ENCODE measurements at regions of chr1 and their contacts with region 1.

Region 1: DNA sequence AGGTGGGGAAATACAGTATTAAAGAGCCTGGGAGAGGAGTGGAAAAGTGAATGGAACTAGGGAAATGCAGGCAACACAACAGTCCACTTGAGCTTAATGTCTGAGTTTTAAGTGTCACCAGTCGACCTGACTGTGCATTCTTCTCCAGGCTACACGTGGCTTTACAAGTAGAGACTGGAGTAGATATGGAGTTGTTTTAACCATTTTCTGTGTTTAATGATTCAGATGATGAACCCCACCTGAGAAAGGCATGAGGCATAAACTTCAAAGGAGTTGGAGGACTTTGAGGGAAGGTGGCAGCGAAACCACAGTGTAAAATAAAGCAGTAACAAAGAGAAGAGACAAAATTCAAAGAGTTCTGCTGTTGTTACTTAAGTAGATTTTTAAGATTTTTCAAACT is 12.6 kb downstream of the FUBP1 start:
- DNase-seq: no peak
- CTCF ChIP-seq: no peak

Region 2: GRCh38 chr1:77954521-77954920 is 11.8 kb before region 1 on chr1:
- CTCF ChIA-PET with region 1: interaction called, 26 read pairs
- POLR2A ChIA-PET with region 1: interaction called, 3 read pairs
- DNase-seq: no peak
- CTCF ChIP-seq: no peak

Region 3: DNA sequence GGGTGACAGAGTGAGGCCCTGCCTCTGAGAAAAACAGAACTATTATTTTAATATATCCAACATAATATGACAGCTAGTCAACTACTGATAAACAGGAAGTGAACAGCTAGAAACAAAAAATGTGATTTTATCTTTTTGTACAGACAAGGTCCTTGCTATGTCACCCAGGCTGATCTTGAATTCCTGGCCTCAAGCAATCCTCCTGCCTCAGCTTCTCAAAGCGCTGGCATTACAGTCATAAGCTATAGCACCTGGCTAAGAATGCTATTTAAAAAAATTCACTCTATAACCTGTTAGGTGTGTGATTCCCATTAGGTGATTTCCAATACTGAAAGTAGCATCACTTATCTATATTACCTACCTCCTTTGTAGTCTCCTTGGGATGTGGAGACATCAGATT is 62.7 kb after region 1 on chr1:
- CTCF ChIA-PET with region 1: no interaction called
- POLR2A ChIA-PET with region 1: no interaction called
- DNase-seq: no peak
- CTCF ChIP-seq: no peak

Region 4: DNA sequence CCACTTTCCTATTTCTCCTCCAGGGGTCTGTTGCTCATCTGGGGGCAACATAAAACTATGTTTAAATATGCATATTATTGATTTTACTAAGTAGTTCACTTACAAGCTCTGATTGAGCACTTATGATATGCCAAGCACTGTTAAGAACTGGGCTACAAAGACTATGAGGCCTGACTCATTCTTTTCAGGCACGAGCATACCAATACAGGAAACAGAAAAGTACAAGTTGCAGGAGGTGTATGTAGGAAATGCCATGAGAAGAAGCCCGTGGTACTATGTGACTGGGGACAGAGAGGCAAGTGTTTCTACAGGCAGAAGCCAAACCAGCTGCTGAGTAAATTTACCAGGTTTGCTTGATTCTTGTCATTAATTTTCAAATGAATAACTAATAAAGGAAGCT is 404.1 kb after region 1 on chr1:
- CTCF ChIA-PET with region 1: no interaction called
- POLR2A ChIA-PET with region 1: no interaction called
- DNase-seq: no peak
- CTCF ChIP-seq: no peak

Measured in GM10248 (cell line).